ENCODE measurements at regions of chr1 and their contacts with region 1.

Region 1: GRCh38 chr1:36223993-36224536 is at the start of gene THRAP3:
- DNase-seq: peak; percentile 96 to 100 (median 100)
- ATAC-seq: peak; percentile 87 to 95 (median 92)
- H3K4me3 ChIP-seq: peak within 1 kb of the TSS; percentile 94 to 97
- H3K4me3 Mint-ChIP-seq: peak within 1 kb of the TSS; percentile 92 to 99 (median 96)
- H3K27ac ChIP-seq: peak within 1 kb of the TSS; percentile 99
- H3K27ac Mint-ChIP-seq: peak within 1 kb of the TSS; percentile 99 to 100
- H3K4me1 ChIP-seq: peaks cover 16 to 41% of the 10 kb centered on the region in 2 experiments
- H3K4me1 Mint-ChIP-seq: peaks cover 36 to 42% (median 41%) of the 10 kb centered on the region in 3 donors
- H3K27me3 ChIP-seq: no peaks in the 10 kb centered on the region
- H3K27me3 Mint-ChIP-seq: no peaks in the 10 kb centered on the region
- total RNA-seq, gene THRAP3: 75.2 to 111 (median 101) TPM

Region 2: GRCh38 chr1:36269408-36269838 is 45.4 kb after region 1 on chr1:
- CTCF ChIA-PET with region 1: no interaction called
- POLR2A ChIA-PET with region 1: interaction called, 3 to 18 read pairs
- DNase-seq: no peak
- ATAC-seq: no peak
- H3K4me3 ChIP-seq: no peak overlapping the region
- H3K4me3 Mint-ChIP-seq: no peak overlapping the region
- H3K27ac ChIP-seq: no peak overlapping the region
- H3K27ac Mint-ChIP-seq: no peak overlapping the region
- H3K4me1 ChIP-seq: no peaks in the 10 kb centered on the region
- H3K4me1 Mint-ChIP-seq: peaks cover 7 to 22% (median 21%) of the 10 kb centered on the region in 3 donors
- H3K27me3 ChIP-seq: no peaks in the 10 kb centered on the region
- H3K27me3 Mint-ChIP-seq: no peaks in the 10 kb centered on the region

Region 3: DNA sequence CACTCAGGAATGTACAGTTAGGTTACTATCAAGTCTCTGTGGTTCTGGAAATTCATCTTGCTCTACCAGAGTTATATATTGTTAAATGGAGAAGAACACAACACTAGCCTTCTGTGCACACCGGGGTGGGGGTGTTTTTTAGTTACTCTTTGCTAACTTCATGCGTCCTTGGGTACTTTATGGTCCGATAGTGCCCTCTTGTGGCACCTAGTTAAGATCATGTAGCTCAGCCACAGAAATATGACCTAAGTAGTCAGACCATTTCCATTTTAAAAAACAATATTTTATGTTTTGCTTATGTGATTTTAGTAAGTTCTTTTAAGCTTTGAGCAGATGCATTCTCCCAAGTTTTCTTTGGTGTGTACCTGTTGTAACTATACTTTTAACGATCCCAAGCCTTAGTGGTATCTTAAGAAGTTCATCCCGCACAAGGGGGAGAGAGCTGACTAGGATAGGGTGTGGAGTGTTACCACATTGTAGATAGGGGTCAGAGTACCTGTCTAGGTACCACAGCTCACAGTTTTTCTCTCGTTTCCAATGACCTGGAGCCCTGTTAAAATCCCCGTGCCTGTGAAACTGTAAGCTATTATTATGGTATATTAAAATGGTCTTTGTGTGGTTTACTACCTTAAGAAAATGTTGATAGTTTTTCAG is 61.5 kb after region 1 on chr1:
- CTCF ChIA-PET with region 1: interaction called in 1 of 2 experiments, 17 read pairs
- POLR2A ChIA-PET with region 1: no interaction called
- DNase-seq: peak in 33 of 35 experiments; percentile 16 to 93 (median 62)
- ATAC-seq: peak; percentile 83 to 94 (median 90)
- H3K4me3 ChIP-seq: no peak overlapping the region
- H3K4me3 Mint-ChIP-seq: no peak overlapping the region
- H3K27ac ChIP-seq: peak overlapping the region; percentile 2
- H3K27ac Mint-ChIP-seq: peak overlapping the region; percentile 58 to 69
- H3K4me1 ChIP-seq: no peaks in the 10 kb centered on the region
- H3K4me1 Mint-ChIP-seq: peaks cover 15 to 22% (median 16%) of the 10 kb centered on the region in 3 donors
- H3K27me3 ChIP-seq: no peaks in the 10 kb centered on the region
- H3K27me3 Mint-ChIP-seq: no peaks in the 10 kb centered on the region

Measured in T-cell (primary cell).